ENCODE measurements at regions of chr3 and their contacts with region 1.

Region 1: DNA sequence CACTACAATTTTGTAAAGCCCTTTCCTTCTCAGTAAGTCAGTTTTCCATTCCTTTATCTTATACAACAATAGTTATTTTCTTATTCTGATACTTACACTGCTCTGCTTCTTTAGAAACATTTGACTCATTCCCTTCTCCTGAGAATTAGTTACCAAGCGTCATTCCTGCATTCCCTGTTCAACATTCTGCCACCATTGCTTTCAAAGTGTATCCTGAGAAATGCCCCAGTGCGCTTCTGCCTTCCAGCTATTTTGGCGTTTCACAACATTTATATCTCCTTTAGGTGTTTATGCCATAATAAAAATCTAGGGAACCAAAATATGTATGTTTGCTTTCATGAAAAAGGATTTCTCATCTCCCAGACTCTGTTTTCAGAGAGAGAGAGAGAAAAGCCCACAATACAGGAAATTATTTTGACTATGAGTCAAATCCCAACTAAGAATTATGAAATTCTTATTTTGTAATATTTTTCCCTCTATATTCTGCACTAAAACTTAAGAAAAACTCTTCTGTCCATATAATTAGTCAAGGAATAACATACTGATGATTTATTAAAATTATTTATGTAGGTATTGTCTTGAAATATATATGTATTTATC is 118.2 kb upstream of the RAP2B start:
- DNase-seq: peak; percentile 60
- ATAC-seq: peak; percentile 30; the same call in 1 of the 2 replicates
- H3K4me3 ChIP-seq: peak overlapping the region; percentile 48
- H3K27ac ChIP-seq: peak overlapping the region; percentile 60
- H3K4me1 ChIP-seq: peaks cover 30% of the 10 kb centered on the region
- H3K27me3 ChIP-seq: no peaks in the 10 kb centered on the region
- CTCF ChIP-seq: no peak

Region 2: DNA sequence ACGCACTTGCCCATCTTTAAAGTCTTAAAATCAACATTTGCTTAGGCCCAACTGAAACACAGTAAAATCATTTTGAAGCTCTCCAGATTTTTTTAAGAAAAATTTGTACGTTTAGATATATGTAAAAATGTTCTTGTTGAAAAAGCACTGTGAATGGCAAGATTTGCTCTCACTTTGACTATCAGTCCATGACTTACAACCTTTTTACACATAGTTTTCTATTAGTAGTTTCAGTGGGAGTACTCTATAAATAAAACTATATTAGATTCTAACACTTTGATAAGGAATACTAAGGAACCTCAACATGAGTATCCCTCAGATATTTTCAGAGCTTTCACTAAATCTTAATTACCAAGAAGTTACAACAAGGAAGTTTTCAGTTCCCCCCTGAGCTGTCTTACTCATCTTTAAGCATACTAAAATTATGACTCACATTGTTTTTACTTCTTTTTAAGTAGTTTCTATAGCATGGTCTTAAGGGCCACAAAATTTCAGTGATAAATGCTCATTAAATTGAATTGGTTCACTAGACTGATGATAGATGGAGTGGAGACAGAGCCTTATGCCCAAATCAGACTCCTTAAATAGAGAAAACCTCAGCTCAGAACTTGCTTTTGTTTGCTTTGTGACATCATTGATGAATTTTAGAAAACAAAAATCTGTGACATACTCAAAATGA is 86.6 kb after region 1 on chr3:
- CTCF ChIA-PET with region 1: no interaction called
- POLR2A ChIA-PET with region 1: no interaction called
- intact Hi-C with region 1: loop called (anchors 2 kb)
- DNase-seq: peak; percentile 77
- ATAC-seq: peak; percentile 96
- H3K4me3 ChIP-seq: peak overlapping the region; percentile 13; the same call in 1 of the 2 replicates
- H3K27ac ChIP-seq: peak overlapping the region; percentile 68
- H3K4me1 ChIP-seq: peaks cover 18% of the 10 kb centered on the region
- H3K27me3 ChIP-seq: no peaks in the 10 kb centered on the region
- CTCF ChIP-seq: no peak

Region 3: GRCh38 chr3:153173758-153174516 is 130.1 kb after region 1 on chr3:
- CTCF ChIA-PET with region 1: interaction called, 6 read pairs
- POLR2A ChIA-PET with region 1: interaction called, 3 read pairs
- intact Hi-C with region 1: loop called (anchors 1 kb)
- DNase-seq: peak; percentile 52
- ATAC-seq: peak; percentile 67
- H3K4me3 ChIP-seq: no peak overlapping the region
- H3K27ac ChIP-seq: no peak overlapping the region
- H3K4me1 ChIP-seq: peaks cover 11% of the 10 kb centered on the region; the same call in 1 of the 2 replicates
- H3K27me3 ChIP-seq: no peaks in the 10 kb centered on the region
- CTCF ChIP-seq: peak; percentile 58

Region 4: GRCh38 chr3:153291056-153291685 is 247.3 kb after region 1 on chr3:
- CTCF ChIA-PET with region 1: interaction called, 17 read pairs
- POLR2A ChIA-PET with region 1: no interaction called
- intact Hi-C with region 1: loop called (anchors 1 kb)
- DNase-seq: peak; percentile 69
- ATAC-seq: peak; percentile 80
- H3K4me3 ChIP-seq: no peak overlapping the region
- H3K27ac ChIP-seq: no peak overlapping the region
- H3K4me1 ChIP-seq: peaks cover 33% of the 10 kb centered on the region
- H3K27me3 ChIP-seq: no peaks in the 10 kb centered on the region
- CTCF ChIP-seq: peak; percentile 85

Region 5: DNA sequence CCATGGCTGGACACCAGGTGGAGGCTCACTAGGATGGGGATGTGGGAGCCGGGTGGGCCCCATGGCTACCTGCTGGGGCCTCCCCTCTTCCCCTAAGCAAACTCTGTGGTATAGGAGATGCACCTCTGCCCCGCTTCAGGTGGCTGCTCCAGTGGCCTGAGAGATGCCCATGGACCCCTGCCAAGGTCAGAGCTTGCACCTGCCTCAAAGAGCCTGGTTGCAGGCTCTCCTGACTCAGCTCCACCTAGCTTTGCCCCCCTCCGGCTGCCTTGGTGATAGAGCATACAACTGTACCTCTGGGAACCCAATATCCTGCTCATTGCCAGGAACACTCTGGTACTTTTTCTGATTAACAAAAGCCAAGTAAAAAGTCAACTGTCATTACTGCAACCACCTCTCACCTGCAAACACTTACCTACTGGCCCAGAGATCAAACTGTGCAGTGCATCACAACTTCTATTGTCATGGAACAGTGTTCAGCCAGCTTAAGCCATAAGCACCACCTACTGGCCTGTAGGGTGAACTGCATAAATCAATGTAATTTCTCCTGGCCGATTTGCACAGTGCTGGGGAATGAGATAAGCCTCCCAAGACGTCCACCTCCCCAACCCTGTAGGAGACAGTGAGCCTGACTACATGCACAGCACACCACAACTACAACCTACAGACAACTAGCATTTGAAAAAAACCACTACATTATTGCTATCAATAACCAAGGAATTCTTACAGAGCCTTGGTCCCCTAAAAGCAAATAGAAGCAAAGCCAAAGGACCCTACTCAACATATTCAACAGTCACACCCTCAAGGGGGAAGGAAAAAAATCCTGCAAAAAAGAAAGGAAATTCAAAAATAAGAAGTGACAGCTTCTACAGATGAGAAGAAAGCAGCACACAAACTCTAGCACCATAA is 725.0 kb after region 1 on chr3:
- CTCF ChIA-PET with region 1: interaction called, 3 read pairs
- POLR2A ChIA-PET with region 1: no interaction called
- intact Hi-C with region 1: loop called (anchors 5 kb)
- DNase-seq: peak; percentile 78
- ATAC-seq: peak; percentile 93
- H3K4me3 ChIP-seq: no peak overlapping the region
- H3K27ac ChIP-seq: no peak overlapping the region
- H3K4me1 ChIP-seq: 0 out of 2 replicates have a peak, but pooled peaks cover 4% of the 10 kb centered on the region
- H3K27me3 ChIP-seq: no peaks in the 10 kb centered on the region
- CTCF ChIP-seq: peak; percentile 96